Calu3 (cell line): ENCODE measurements at regions of chr2 and their contacts with region 1.

Region 1: GRCh38 chr2:138373993-138374408 is 127.6 kb upstream of the SPOPL start:
- DNase-seq: peak; percentile 28
- H3K4me3 Mint-ChIP-seq: no peak overlapping the region
- H3K27ac Mint-ChIP-seq: no peak overlapping the region
- H3K4me1 Mint-ChIP-seq: no peaks in the 10 kb centered on the region
- H3K27me3 Mint-ChIP-seq: no peaks in the 10 kb centered on the region
- CTCF ChIP-seq: peak; percentile 43

Region 2: GRCh38 chr2:137947728-137948336 is 426.2 kb before region 1 on chr2:
- CTCF ChIA-PET with region 1: no interaction called
- intact Hi-C with region 1: loop called (anchors 10 kb)
- DNase-seq: peak; percentile 77
- H3K4me3 Mint-ChIP-seq: no peak overlapping the region
- H3K27ac Mint-ChIP-seq: peak overlapping the region; percentile 44
- H3K4me1 Mint-ChIP-seq: peaks cover 77% of the 10 kb centered on the region
- H3K27me3 Mint-ChIP-seq: no peaks in the 10 kb centered on the region
- CTCF ChIP-seq: peak; percentile 37

Region 3: DNA sequence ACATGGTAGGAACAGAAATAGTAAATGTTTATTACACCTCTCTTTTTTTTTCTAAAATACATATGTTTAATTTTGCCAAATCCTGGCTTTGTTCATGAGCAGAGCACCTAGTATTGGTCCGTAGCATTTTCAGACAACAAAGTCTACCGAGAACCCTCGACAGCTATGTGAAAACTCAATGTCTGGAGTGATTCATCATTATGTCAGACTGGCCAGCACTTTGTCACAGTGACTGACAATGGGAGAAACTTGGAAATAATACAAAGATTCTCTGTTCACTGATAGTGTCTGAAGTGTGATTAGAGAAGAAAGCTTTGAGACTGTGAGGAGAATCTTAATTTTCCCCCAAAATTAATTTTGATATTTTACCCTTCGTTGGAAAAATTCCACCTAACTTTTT is 266.7 kb before region 1 on chr2:
- CTCF ChIA-PET with region 1: no interaction called
- intact Hi-C with region 1: loop called (anchors 5 kb)
- DNase-seq: no peak
- H3K4me3 Mint-ChIP-seq: peak overlapping the region; percentile 29
- H3K27ac Mint-ChIP-seq: peak overlapping the region; percentile 50
- H3K4me1 Mint-ChIP-seq: peaks cover 53% of the 10 kb centered on the region
- H3K27me3 Mint-ChIP-seq: no peaks in the 10 kb centered on the region
- CTCF ChIP-seq: no peak

Region 4: GRCh38 chr2:138245310-138245709 is 128.7 kb before region 1 on chr2:
- CTCF ChIA-PET with region 1: no interaction called
- intact Hi-C with region 1: loop called (anchors 5 kb)
- DNase-seq: no peak
- H3K4me3 Mint-ChIP-seq: no peak overlapping the region
- H3K27ac Mint-ChIP-seq: peak overlapping the region; percentile 72
- H3K4me1 Mint-ChIP-seq: peaks cover 34% of the 10 kb centered on the region
- H3K27me3 Mint-ChIP-seq: no peaks in the 10 kb centered on the region
- CTCF ChIP-seq: no peak

Region 5: GRCh38 chr2:138501425-138502283 is 127.7 kb after region 1 on chr2 and contains the start of gene SPOPL:
- CTCF ChIA-PET with region 1: no interaction called
- intact Hi-C with region 1: no loop called
- DNase-seq: peak; percentile 95
- H3K4me3 Mint-ChIP-seq: peak within 1 kb of the TSS; percentile 86
- H3K27ac Mint-ChIP-seq: peak within 1 kb of the TSS; percentile 87
- H3K4me1 Mint-ChIP-seq: peaks cover 22% of the 10 kb centered on the region
- H3K27me3 Mint-ChIP-seq: no peaks in the 10 kb centered on the region
- CTCF ChIP-seq: peak; percentile 35
- total RNA-seq, gene SPOPL: 37.8 and 40.8 TPM in 2 replicates

Region 6: GRCh38 chr2:138787053-138787666 is 413.2 kb after region 1 on chr2:
- CTCF ChIA-PET with region 1: interaction called, 3 read pairs
- intact Hi-C with region 1: loop called (anchors 1 kb)
- DNase-seq: peak; percentile 34
- H3K4me3 Mint-ChIP-seq: no peak overlapping the region
- H3K27ac Mint-ChIP-seq: no peak overlapping the region
- H3K4me1 Mint-ChIP-seq: peaks cover 7% of the 10 kb centered on the region
- H3K27me3 Mint-ChIP-seq: peaks cover 9% of the 10 kb centered on the region
- CTCF ChIP-seq: peak; percentile 71